Gastrocnemius medialis (tissue), 4 donors: ENCODE measurements at regions of chr5 and their contacts with region 1.

Region 1: GRCh38 chr5:69217548-69218526 is 16.8 kb upstream of the CDK7 start:
- DNase-seq: peak; percentile 96 to 97
- ATAC-seq: peak; percentile 95 to 97
- H3K4me3 ChIP-seq: peak overlapping the region; percentile 95 to 100 (median 99)
- H3K27ac ChIP-seq: peak overlapping the region; percentile 93 to 100 (median 98)
- H3K4me1 ChIP-seq: peaks cover 10% of the 10 kb centered on the region in 2 donors
- H3K27me3 ChIP-seq: no peaks in the 10 kb centered on the region
- CTCF ChIP-seq: peak in 4 of 5 experiments; percentile 42 to 62 (median 51)
- POLR2A ChIP-seq: peak; percentile 92 to 95

Region 2: DNA sequence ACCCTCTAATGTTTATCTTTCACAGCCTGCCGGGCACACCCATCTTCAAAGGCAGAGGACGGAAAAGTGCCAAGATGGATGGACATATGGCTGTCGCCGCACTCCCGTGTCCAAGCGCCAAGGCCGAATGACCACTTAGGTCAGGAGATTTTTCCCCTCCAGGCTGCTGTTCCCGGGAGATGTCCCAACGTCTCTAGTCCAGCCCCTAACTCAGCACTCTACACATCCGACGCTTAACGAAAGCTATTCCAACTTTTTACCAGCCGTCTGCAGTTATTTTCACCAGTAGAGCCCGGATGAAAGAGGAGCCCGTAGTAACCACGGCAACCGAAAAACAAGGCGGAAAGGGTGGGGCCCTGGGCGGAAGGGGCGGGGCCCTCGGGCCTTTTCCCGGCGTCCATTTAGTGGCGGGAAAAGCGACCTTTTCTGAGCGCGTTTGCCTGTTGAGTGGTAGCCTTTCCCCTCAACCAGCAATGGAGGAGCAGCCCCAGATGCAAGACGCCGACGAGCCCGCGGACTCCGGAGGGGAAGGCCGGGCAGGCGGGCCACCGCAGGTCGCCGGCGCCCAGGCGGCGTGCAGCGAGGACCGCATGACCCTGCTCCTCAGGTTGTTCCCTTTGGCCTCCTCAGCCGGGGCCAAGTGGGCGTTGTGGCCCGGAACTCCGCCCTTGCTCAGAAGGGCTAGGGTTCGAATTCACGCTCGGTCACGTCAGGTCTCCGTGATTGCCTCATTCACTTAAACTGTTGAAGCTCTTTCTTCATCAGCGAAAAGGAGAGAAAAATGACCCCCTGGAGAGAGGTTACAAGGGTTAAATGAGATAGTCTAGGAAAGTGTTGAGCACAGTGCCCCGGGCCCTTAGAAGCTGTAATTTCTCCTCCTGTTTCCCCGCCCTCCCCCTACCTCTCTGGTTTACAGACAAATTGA is 28.4 kb before region 1 on chr5 and contains the start of gene CENPH:
- in situ Hi-C with region 1: no loop called
- intact Hi-C with region 1: loop called (anchors 1 kb)
- DNase-seq: peak; percentile 59 to 77
- ATAC-seq: peak; percentile 98
- H3K4me3 ChIP-seq: peak within 1 kb of the TSS; percentile 69 to 87 (median 78)
- H3K27ac ChIP-seq: peak within 1 kb of the TSS; percentile 65 to 74 (median 68)
- H3K4me1 ChIP-seq: peaks cover 11 to 14% of the 10 kb centered on the region in 2 donors
- H3K27me3 ChIP-seq: no peaks in the 10 kb centered on the region
- CTCF ChIP-seq: no peak
- POLR2A ChIP-seq: no peak
- total RNA-seq, gene CENPH: 0.87 to 4.9 (median 1.8) TPM